IMR-90 (cell line): ENCODE measurements at regions of chr5 and their contacts with region 1.

Region 1: GRCh38 chr5:61256474-61256873 is 75.6 kb upstream of the ZSWIM6 start:
- DNase-seq: no peak
- ATAC-seq: no peak
- H3K4me3 ChIP-seq: no peak overlapping the region
- H3K27ac ChIP-seq: no peak overlapping the region
- H3K4me1 ChIP-seq: no peaks in the 10 kb centered on the region
- H3K27me3 ChIP-seq: no peaks in the 10 kb centered on the region; the same call in 1 of the 2 replicates
- CTCF ChIP-seq: no peak
- POLR2A ChIP-seq: no peak
- RAD21 ChIP-seq: no peak

Region 2: DNA sequence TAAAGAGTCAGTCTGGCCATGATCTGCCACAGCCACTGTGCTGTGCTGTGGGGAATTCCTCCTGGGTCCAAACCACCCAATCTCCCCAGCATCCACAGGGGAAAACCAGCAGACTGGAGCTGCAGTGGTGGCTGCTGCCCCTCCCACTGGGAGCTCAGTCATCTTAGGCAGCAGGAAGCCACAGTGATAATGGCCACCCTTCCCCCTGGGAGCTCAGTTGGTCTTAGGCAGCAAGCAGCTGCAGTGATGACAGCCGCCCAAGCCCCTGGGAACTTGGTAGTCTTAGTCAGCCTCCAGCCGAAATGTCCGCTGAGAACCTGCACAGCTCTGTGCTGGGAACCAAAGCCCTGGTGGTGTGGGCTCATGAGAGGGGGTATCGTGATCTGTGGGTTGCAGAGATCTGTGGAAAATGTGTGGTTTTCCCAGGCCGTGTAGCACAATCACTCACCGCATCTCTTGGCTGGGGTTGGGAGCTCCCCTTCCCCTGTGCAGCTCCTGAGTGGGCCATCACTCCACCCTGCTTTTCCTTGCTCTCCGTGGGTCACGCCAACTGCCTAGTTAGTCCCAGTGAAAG is 55.8 kb before region 1 on chr5:
- CTCF ChIA-PET with region 1: no interaction called
- POLR2A ChIA-PET with region 1: no interaction called
- dilution Hi-C with region 1: no loop called
- in situ Hi-C with region 1: no loop called
- intact Hi-C with region 1: loop called (anchors 5 kb)
- DNase-seq: peak; percentile 26
- ATAC-seq: peak; percentile 35
- H3K4me3 ChIP-seq: no peak overlapping the region
- H3K27ac ChIP-seq: no peak overlapping the region
- H3K4me1 ChIP-seq: peaks cover 2% of the 10 kb centered on the region; the same call in 1 of the 2 replicates
- H3K27me3 ChIP-seq: no peaks in the 10 kb centered on the region
- CTCF ChIP-seq: no peak
- POLR2A ChIP-seq: no peak
- RAD21 ChIP-seq: no peak